HEK293 (cell line): ENCODE measurements at regions of chr17 and their contacts with region 1.

Region 1: DNA sequence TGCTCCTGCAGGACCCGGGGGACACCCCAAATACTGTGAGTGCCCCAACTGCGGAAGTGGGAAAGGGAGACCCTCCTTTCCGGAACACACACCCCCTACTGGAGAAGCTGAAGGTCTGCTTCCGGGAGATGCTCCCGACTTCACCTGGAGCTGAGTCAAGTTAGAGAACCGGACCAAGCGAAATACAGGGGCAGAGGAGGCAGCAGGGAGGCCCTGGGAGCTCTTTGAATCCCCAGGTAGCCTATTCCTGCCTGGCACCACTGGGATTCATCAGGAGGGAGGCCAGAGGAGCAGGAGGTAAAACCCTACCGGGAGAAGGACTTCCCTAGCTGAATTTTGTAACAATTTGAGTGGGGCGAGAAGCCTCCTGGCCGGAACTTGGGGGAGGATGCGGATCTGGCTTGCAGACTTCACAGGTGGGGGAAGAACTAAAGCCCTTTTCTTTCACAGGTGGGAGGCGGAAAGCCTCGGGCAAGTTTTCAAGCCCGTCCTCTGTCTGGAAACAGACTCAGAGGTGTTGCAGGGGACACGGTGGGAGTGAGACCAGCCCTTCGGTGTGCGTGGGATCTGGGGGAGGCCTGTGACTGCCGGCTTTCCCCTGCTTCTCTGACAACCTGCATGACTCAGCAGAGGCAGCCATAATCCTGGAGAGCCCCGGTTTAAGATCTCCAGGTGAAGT is 22.4 kb upstream of the TEKT1 start:
- H3K4me3 ChIP-seq: peak overlapping the region; percentile 62
- H3K27ac ChIP-seq: peak overlapping the region; percentile 78
- H3K4me1 ChIP-seq: no peaks in the 10 kb centered on the region
- CTCF ChIP-seq: peak; percentile 57

Region 2: DNA sequence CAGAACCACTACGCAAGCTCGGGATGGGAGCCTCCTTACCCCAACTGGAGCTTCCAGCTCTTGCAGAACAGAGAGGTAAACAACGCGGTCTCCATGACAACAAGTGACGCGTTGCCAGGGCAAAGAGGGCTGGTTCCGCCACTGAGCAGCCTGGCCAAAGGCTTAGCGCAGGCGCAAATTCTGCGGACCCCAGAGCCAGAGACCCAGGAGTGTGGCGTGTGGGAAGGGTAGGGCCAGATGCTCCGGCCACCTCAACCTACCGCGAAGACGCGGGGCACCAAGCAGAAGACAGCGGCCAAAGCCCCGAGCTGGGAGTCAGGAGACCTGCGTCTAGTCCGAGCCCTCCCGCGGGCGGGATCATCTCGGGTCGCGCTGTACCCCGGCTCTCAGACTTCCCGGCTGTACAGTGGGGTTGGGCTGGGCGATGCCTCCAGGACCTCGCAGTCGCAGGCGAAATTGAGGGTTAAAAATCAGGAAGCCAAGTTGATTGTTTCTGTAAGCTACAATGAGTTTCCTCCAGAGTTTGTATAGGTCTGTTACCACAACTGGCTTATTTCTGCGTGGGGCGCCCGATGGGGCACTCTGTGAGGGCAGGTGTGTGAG is 22.1 kb before region 1 on chr17 and contains the start of gene TEKT1:
- CTCF ChIA-PET with region 1: interaction called, 13 read pairs
- POLR2A ChIA-PET with region 1: no interaction called
- H3K4me3 ChIP-seq: peak within 1 kb of the TSS; percentile 65
- H3K27ac ChIP-seq: no peak within 1 kb of the TSS
- H3K4me1 ChIP-seq: no peaks in the 10 kb centered on the region
- CTCF ChIP-seq: no peak

Region 3: DNA sequence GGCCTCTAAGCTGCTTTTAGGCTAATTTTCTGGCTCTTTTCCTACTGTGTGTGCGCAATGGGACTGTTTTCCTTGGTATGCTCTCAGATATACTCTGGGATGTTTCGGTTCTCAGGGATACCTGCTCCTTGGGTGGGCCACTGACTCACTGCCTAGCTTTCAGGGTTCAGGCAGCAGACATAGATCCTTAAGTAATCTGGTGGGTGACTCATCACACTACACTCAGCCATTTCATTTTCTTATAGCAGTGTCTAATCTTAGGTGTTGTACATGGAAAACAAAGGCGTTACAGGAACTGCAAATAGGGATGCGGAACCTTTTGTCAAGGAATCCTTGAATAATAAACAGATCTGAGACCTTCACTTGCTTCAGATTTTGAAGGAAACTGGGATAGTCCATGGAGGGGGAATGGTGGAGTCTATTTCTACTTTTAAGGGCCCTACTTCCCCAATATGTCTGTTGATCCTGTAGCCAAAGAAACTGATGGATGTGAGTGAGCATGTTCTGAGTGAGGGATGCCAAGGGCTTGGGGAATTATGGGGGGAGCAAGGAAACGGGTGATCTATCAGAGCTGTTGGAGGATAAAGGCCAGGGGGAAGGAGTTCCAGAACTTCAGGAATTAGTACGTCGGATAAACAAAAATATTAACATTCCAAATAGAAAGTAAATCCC is 18.4 kb after region 1 on chr17:
- CTCF ChIA-PET with region 1: interaction called, 14 read pairs
- POLR2A ChIA-PET with region 1: no interaction called
- H3K4me3 ChIP-seq: no peak overlapping the region
- H3K27ac ChIP-seq: no peak overlapping the region
- H3K4me1 ChIP-seq: no peaks in the 10 kb centered on the region
- CTCF ChIP-seq: no peak

Region 4: DNA sequence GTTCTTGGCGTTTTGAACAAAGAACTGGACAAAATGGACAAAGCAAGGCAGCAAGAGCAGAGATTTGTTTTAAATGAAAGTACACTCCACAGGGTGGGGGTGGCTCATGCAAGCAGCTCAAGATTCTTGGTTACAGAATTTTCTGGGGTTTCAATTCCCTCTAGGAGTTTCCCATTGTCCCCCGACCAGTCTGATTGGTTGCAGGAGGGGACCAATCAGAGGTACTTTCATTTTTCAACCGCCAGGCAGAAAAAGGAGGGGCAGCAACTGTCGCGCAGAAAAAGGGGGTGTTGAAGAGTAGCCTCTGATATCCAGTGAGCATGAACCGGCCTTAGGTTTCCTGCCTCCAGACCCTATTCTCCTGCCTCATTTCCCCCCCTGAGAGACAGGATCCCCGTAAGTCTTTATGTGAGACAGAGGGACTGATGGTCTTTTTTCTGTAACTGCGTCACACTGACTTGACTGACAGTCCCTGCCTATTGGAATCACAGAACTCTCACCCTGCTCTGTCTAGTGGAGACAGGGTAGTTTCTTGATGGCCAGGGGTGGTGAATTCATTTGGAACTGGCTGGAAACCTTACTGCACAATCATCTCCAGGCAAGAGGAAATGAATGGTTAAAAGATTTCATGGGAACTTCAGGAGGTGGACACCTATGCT is 82.6 kb after region 1 on chr17:
- CTCF ChIA-PET with region 1: no interaction called
- POLR2A ChIA-PET with region 1: no interaction called
- H3K4me3 ChIP-seq: no peak overlapping the region
- H3K27ac ChIP-seq: no peak overlapping the region
- H3K4me1 ChIP-seq: no peaks in the 10 kb centered on the region
- CTCF ChIP-seq: no peak